ENCODE measurements at regions of chr9 and their contacts with region 1.

Region 1: GRCh38 chr9:79571309-79572031 is at the start of gene TLE4:
- DNase-seq: peak; percentile 100
- ATAC-seq: peak; percentile 90
- H3K4me3 ChIP-seq: peak within 1 kb of the TSS; percentile 83
- H3K27ac ChIP-seq: peak within 1 kb of the TSS; percentile 77
- H3K4me1 ChIP-seq: peaks cover 2% of the 10 kb centered on the region; the same call in 1 of the 2 replicates
- H3K27me3 ChIP-seq: no peaks in the 10 kb centered on the region
- CTCF ChIP-seq: no peak
- POLR2A ChIP-seq: peak; percentile 98
- RAD21 ChIP-seq: 0 out of 2 replicates have a peak, but pooled peaks have one; percentile 1
- total RNA-seq, gene TLE4: 76.9 and 78.1 TPM in 2 replicates

Region 2: DNA sequence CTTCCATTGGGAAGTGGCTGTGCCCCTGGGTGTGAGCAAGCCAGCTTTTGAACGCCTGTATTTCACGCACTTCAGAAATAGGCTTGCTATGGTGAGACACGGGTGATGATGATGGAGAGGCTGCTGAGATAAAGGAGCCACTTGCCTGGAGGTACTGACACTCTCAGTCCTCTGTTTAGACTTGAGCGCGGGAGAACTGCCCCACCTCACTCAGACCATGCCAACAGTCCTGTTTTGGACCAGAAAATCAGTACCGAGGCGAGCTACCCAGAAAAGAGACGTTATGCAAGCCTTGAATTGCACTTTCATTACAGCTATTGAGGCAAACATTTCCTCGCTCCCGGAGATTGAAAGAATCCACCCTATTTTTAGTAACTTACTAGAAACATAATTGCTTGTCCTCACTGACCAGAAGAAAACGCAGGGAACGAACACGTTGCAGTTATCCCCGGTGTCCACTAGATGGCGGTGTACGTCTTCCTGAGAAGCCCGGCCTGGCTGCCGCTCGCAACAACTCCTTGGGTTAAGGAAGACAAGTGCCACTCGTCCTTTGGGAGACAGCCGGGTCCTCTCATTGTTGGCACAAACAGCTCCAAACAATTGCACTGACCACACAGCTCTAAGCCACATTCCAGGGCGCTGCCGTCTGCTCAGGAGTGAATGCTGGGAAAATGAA is 1132.1 kb before region 1 on chr9:
- CTCF ChIA-PET with region 1: no interaction called
- POLR2A ChIA-PET with region 1: no interaction called
- dilution Hi-C with region 1: no loop called
- in situ Hi-C with region 1: loop called (anchors 10 kb)
- intact Hi-C with region 1: loop called (anchors 2 kb)
- DNase-seq: peak; percentile 89
- ATAC-seq: peak; percentile 97
- H3K4me3 ChIP-seq: peak overlapping the region; percentile 5; the same call in 1 of the 2 replicates
- H3K27ac ChIP-seq: no peak overlapping the region
- H3K4me1 ChIP-seq: no peaks in the 10 kb centered on the region
- H3K27me3 ChIP-seq: peaks cover 14% of the 10 kb centered on the region
- CTCF ChIP-seq: peak; percentile 95
- POLR2A ChIP-seq: peak; percentile 30; the same call in 1 of the 2 replicates
- RAD21 ChIP-seq: peak; percentile 97

Region 3: DNA sequence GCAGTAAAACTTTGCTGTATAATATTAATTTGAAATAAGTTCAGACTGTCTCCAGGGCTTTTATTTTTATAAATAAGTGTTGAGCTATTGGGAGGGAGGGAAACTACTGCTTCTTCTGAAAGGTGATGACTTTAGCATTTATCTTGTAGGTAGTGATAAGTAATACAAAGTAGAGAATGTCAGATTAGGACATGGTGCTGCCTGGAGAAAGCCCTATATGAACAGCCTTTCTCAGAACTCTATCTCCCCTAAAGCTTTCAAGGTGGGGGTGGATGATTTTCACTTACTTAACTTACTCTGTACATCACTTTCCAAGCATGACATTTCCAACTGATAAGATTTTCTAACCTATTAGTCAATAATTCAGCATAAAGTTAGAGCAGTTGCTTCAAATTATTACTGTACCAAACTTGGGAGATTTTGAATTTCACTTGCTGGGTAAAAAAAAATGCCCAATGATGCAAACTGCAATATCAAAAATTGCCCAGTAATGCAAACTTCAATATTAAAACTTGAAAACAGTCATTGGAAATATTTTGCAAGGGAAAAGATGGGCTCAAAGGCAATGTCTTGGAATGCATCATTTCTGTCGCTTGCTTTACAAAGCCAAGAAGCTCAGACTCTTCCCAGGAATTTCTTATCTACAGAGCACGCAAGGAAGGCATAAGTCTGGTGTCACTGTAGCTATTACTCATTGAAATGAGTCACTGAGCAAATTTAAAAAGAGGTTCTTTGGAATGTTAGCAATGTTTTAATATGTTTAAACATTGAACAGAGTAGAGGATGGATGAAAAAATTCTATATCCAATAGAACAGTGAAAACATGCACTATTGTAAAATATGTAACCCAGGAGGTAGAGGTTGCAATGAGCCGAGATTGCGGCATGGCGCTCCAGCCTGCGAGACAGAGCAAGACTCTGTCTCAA is 705.0 kb before region 1 on chr9:
- CTCF ChIA-PET with region 1: no interaction called
- POLR2A ChIA-PET with region 1: no interaction called
- dilution Hi-C with region 1: no loop called
- in situ Hi-C with region 1: no loop called
- intact Hi-C with region 1: loop called (anchors 5 kb)
- DNase-seq: peak; percentile 96
- ATAC-seq: peak; percentile 85
- H3K4me3 ChIP-seq: no peak overlapping the region
- H3K27ac ChIP-seq: peak overlapping the region; percentile 27
- H3K4me1 ChIP-seq: peaks cover 7% of the 10 kb centered on the region
- H3K27me3 ChIP-seq: no peaks in the 10 kb centered on the region
- CTCF ChIP-seq: no peak
- POLR2A ChIP-seq: no peak
- RAD21 ChIP-seq: no peak

Region 4: DNA sequence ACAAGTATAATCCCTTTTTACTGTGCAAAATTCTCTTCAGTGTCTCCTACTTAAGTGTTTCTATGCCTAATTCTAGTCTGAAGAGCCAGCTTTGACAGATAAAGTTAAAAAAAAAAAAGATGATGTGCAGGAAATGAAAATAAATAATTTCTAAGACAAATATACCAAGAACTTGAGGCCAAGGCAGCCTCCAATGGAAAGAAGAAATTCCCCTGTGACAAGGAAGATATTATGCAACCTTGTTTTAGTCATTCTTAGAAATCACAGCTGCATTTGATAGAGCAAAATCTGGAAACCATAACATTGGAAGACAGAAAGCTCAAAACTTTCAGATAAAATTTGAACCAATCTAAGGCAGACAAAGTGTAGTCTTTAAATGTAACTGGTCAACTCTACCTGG is 375.6 kb before region 1 on chr9:
- CTCF ChIA-PET with region 1: no interaction called
- POLR2A ChIA-PET with region 1: no interaction called
- dilution Hi-C with region 1: no loop called
- in situ Hi-C with region 1: loop called (anchors 10 kb)
- intact Hi-C with region 1: loop called (anchors 5 kb)
- DNase-seq: peak; percentile 96
- ATAC-seq: peak; percentile 45
- H3K4me3 ChIP-seq: no peak overlapping the region
- H3K27ac ChIP-seq: no peak overlapping the region
- H3K4me1 ChIP-seq: peaks cover 11% of the 10 kb centered on the region
- H3K27me3 ChIP-seq: no peaks in the 10 kb centered on the region
- CTCF ChIP-seq: no peak
- POLR2A ChIP-seq: no peak
- RAD21 ChIP-seq: no peak

Region 5: GRCh38 chr9:79694676-79695400 is 123.4 kb after region 1 on chr9:
- CTCF ChIA-PET with region 1: no interaction called
- POLR2A ChIA-PET with region 1: no interaction called
- dilution Hi-C with region 1: no loop called
- in situ Hi-C with region 1: no loop called
- intact Hi-C with region 1: loop called (anchors 2 kb)
- DNase-seq: peak; percentile 92
- ATAC-seq: peak; percentile 88
- H3K4me3 ChIP-seq: no peak overlapping the region
- H3K27ac ChIP-seq: no peak overlapping the region
- H3K4me1 ChIP-seq: peaks cover 6% of the 10 kb centered on the region
- H3K27me3 ChIP-seq: no peaks in the 10 kb centered on the region
- CTCF ChIP-seq: no peak
- POLR2A ChIP-seq: no peak
- RAD21 ChIP-seq: no peak

Region 6: GRCh38 chr9:79955300-79955699 is 383.8 kb after region 1 on chr9:
- CTCF ChIA-PET with region 1: no interaction called
- POLR2A ChIA-PET with region 1: no interaction called
- dilution Hi-C with region 1: no loop called
- in situ Hi-C with region 1: no loop called
- intact Hi-C with region 1: loop called (anchors 5 kb)
- DNase-seq: no peak
- ATAC-seq: no peak
- H3K4me3 ChIP-seq: no peak overlapping the region
- H3K27ac ChIP-seq: no peak overlapping the region
- H3K4me1 ChIP-seq: no peaks in the 10 kb centered on the region
- H3K27me3 ChIP-seq: no peaks in the 10 kb centered on the region; the same call in 1 of the 2 replicates
- CTCF ChIP-seq: peak; percentile 33
- POLR2A ChIP-seq: no peak
- RAD21 ChIP-seq: peak; percentile 44

Measured in IMR-90 (cell line).